Stomach (tissue), 19 donors: ENCODE measurements at regions of chr17 and their contacts with region 1.

Region 1: GRCh38 chr17:33318241-33318640 is 25.1 kb upstream of the ASIC2 start:
- DNase-seq: no peak
- H3K4me3 ChIP-seq: no peak overlapping the region
- H3K27ac ChIP-seq: no peak overlapping the region
- H3K4me1 ChIP-seq: no peaks in the 10 kb centered on the region
- H3K27me3 ChIP-seq: peaks cover 0 to 11% (median 0%) of the 10 kb centered on the region in 3 donors
- CTCF ChIP-seq: no peak
- EP300 ChIP-seq: no peak
- POLR2A ChIP-seq: no peak

Region 2: GRCh38 chr17:33154869-33155455 is 163.3 kb before region 1 on chr17:
- intact Hi-C with region 1: no loop called
- DNase-seq: no peak
- H3K4me3 ChIP-seq: no peak overlapping the region
- H3K27ac ChIP-seq: no peak overlapping the region
- H3K4me1 ChIP-seq: no peaks in the 10 kb centered on the region
- H3K27me3 ChIP-seq: peaks cover 0 to 8% (median 0%) of the 10 kb centered on the region in 3 donors
- CTCF ChIP-seq: no peak
- EP300 ChIP-seq: no peak
- POLR2A ChIP-seq: no peak

Region 3: DNA sequence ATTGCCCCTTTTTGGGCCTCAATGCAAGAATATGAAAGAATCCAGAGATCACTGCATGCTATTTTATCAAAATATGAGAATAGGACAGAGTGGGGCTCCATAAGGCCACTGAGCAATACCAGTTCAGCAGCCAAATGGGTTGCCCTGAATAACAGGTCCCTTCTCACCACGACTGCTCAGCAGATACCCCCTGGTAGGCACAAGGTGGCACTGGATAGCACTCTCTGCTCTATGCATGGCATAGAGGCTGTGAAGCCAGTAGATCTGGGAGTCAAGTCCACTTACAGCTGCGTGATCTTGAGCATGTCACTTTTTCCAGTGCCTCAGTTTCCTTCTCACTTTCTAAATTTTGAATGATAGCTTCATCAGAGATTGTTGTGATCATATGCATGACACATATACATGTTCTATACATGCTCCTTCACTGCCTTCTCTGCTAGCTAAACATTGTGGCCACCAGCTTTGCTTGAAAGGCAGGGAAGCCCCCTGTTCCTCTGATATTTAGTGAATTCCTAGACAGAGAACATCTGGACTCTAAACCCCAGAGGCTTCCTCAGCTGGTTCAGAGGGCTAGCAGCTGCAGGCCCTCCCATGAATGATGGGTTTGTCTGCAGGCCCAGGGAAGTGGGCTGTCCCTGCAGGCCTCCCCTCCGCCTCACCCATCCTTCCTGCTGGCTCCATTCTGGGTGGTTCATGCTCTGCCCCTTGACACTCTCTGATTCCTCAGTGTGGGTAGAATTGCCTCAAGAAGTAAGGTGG is 59.8 kb after region 1 on chr17:
- intact Hi-C with region 1: loop called (anchors 10 kb)
- DNase-seq: peak in 1 of 2 donors; percentile 38
- H3K4me3 ChIP-seq: no peak overlapping the region
- H3K27ac ChIP-seq: no peak overlapping the region
- H3K4me1 ChIP-seq: no peaks in the 10 kb centered on the region
- H3K27me3 ChIP-seq: no peaks in the 10 kb centered on the region
- CTCF ChIP-seq: no peak
- EP300 ChIP-seq: no peak
- POLR2A ChIP-seq: no peak